ENCODE measurements at regions of chr2 and their contacts with region 1.

Region 1: DNA sequence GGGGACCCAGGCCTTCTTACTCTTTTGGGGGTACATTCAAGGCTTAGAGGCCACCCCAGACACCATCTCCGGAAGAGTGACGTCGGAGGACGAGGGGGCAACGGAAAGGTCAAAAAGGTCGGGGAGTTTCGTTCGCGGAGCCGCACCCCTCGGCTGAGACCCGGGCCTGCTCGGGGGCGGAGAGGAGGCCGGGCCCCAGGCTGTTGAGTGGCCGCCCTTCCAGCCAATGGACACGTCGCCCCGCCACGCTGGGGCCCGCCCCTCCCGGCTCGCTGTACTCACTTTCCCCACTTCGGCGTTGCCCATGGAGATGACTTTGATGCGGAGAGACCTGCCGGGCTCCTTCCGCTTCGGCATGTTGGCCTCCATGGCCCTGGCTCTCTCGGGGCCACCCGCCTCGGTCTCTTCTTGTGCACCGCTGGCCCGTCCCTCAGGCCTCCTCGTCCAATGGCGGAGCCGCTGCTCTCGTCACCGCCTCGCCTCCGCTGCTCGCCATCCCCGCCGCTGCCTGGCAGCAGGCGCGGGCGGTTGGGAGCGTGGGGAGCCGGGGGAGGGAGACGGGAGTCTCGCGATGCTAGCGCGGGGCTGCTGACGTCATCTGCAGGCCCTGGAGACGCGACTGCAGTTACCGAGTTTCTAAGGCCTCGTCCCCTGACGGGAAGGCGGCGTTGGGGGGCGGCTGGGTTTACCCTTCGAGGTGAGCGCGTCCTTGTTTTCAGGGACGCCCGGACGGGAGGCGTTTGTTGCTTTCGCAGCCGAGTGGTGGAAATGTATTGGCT is at the start of gene DNAJC27:
- DNase-seq: peak; percentile 98 to 99 (median 99)
- H3K4me3 ChIP-seq: peak within 1 kb of the TSS; percentile 85
- H3K27ac ChIP-seq: peak within 1 kb of the TSS; percentile 95 to 99
- H3K4me1 ChIP-seq: peaks cover 6% of the 10 kb centered on the region
- H3K27me3 ChIP-seq: no peaks in the 10 kb centered on the region
- CTCF ChIP-seq: peak in 2 of 3 donors; percentile 7 to 22
- EP300 ChIP-seq: peak; percentile 87
- POLR2A ChIP-seq: peak; percentile 97
- total RNA-seq, gene DNAJC27: 10.2 to 17.6 (median 13.5) TPM

Region 2: DNA sequence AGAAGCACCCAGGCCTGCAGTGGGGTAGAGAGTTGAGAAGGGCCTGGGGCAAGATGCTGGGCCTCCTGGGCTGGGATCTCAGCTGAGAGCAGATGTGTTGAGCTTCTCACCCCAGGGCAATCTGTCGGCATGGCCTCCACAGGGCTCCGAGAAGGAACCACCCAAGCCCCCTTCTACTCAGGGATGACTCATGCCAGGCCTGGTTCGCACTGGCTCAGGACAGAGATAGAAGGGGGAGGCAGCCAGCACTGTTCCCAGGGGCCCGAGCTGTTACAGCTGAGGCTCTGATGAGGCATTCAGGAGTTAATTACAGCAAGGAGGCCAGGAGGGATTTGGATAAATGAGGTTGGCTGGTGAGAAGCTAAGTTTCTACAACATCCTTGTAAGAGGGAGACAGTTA is 116.0 kb before region 1 on chr2:
- intact Hi-C with region 1: loop called in 1 of 4 experiments (anchors 5 kb)
- DNase-seq: peak; percentile 75 to 85 (median 82)
- H3K4me3 ChIP-seq: no peak overlapping the region
- H3K27ac ChIP-seq: peak overlapping the region; percentile 81 to 90
- H3K4me1 ChIP-seq: peaks cover 38% of the 10 kb centered on the region
- H3K27me3 ChIP-seq: no peaks in the 10 kb centered on the region
- CTCF ChIP-seq: no peak
- EP300 ChIP-seq: no peak
- POLR2A ChIP-seq: no peak

Region 3: DNA sequence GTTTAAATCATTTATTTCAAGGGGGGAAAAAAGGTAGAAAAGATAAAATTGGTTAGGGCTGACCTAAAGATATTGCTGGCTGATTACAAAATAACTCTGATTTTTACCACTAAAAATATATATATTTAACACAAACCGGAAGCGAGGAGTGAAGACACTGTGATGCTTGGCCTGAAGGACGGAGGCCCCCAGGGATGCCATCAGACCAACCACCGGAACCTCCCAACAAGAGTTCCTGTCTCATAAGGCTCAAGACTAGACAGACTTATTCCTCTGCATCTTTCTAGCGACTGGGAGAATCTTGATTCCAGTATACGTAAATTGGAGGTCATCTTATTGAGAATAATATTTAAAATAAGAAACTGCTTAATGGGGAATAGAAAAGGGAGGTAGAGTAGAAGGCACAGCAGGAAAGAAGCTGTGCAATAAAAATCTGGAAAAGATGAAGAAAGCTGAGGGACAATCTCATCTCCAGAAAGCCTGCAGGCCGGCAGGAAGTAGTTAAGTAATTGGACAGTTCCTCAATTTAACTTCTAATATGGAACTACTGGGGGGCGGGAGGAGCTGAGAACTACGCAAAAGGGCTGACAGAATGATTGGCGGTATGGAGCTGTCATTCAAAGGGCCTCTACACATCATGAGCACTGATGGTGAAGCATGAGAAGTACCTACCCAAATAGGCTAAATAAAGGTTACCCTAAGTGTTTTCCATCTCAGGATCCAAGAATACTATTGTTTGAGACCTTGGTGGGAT is 610.5 kb after region 1 on chr2:
- intact Hi-C with region 1: no loop called
- DNase-seq: no peak
- H3K4me3 ChIP-seq: no peak overlapping the region
- H3K27ac ChIP-seq: no peak overlapping the region
- H3K4me1 ChIP-seq: peaks cover 3% of the 10 kb centered on the region
- H3K27me3 ChIP-seq: no peaks in the 10 kb centered on the region
- CTCF ChIP-seq: no peak
- EP300 ChIP-seq: no peak
- POLR2A ChIP-seq: no peak

Measured in ovary (tissue), 10 donors.